Right cardiac atrium (tissue), 5 donors: ENCODE measurements at regions of chr11 and their contacts with region 1.

Region 1: DNA sequence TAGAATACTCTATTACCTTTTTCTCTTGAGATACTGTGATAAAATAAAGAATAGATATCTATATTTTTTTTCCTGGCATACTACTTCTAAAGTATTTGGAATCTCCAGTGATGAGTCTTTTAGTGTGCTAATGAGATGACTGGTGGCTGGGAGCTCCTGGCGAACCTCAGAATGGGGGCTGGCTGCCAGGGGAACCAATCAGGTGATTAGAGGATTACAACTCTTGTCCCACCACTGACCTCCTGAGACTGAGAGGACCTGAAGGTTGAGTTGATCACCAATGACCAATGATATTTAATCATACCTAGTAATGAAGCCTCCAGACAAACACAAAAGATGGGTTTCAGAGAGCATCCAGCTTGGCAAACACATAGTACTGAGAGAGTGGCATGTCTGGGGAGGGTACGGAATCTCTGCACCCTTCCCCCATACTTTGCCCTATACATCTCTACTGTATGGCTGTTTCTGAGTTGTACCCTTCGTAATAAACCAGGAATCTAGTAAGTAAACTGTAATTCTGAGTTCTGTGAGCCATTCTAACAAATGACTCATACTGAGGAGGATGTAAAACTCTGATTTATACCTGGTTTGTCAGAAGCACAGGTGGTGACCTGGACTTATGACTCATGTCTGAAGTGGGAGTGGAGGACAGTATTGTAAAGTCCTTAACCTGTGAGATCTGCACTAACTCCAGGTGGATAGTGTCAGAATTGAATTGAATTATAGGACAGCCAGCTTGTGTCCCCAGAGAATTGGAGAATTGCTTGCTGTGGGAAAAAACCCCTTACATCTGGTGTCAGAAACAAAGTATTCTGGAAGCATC is 325.3 kb upstream of the LRRC4C start:
- DNase-seq: no peak
- ATAC-seq: no peak
- H3K4me3 ChIP-seq: no peak overlapping the region
- H3K27ac ChIP-seq: no peak overlapping the region
- H3K4me1 ChIP-seq: no peaks in the 10 kb centered on the region
- H3K27me3 ChIP-seq: no peaks in the 10 kb centered on the region

Region 2: GRCh38 chr11:41665441-41666360 is 119.0 kb before region 1 on chr11:
- intact Hi-C with region 1: no loop called
- DNase-seq: no peak
- ATAC-seq: no peak
- H3K4me3 ChIP-seq: no peak overlapping the region
- H3K27ac ChIP-seq: no peak overlapping the region
- H3K4me1 ChIP-seq: no peaks in the 10 kb centered on the region
- H3K27me3 ChIP-seq: no peaks in the 10 kb centered on the region

Region 3: DNA sequence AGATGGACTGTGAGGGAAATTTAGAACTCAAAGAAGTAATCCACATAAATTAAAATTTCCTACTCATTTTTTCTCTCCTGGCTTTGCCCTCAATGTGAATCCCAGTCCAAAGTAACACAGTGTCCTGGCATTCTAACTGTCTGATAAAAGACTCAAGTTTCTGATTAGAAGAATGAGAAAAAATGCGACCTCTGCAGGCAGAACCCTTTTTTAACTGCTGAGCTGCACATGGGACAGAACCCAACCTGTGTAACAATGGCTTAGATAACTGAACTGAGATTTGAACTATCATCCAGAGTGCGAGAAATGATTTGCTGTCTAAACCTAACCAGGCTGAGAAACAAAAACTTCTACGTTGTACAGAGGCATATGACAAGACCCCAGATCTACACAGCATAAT is 60.3 kb after region 1 on chr11:
- intact Hi-C with region 1: loop called in 1 of 4 experiments (anchors 10 kb)
- DNase-seq: no peak
- ATAC-seq: no peak
- H3K4me3 ChIP-seq: no peak overlapping the region
- H3K27ac ChIP-seq: no peak overlapping the region
- H3K4me1 ChIP-seq: no peaks in the 10 kb centered on the region
- H3K27me3 ChIP-seq: no peaks in the 10 kb centered on the region